Natural killer cell (primary cell): ENCODE measurements at regions of chr16 and their contacts with region 1.

Region 1: GRCh38 chr16:17404941-17405689 is 65.6 kb downstream of the XYLT1 start:
- DNase-seq: no peak
- ATAC-seq: no peak
- H3K4me3 ChIP-seq: no peak overlapping the region
- H3K4me3 Mint-ChIP-seq: no peak overlapping the region
- H3K27ac ChIP-seq: no peak overlapping the region
- H3K27ac Mint-ChIP-seq: peak overlapping the region in 1 of 2 donors; percentile 16
- H3K4me1 ChIP-seq: peaks cover 23% of the 10 kb centered on the region
- H3K4me1 Mint-ChIP-seq: peaks cover 40 to 45% of the 10 kb centered on the region in 2 donors
- H3K27me3 ChIP-seq: no peaks in the 10 kb centered on the region
- H3K27me3 Mint-ChIP-seq: no peaks in the 10 kb centered on the region
- CTCF ChIP-seq: no peak

Region 2: DNA sequence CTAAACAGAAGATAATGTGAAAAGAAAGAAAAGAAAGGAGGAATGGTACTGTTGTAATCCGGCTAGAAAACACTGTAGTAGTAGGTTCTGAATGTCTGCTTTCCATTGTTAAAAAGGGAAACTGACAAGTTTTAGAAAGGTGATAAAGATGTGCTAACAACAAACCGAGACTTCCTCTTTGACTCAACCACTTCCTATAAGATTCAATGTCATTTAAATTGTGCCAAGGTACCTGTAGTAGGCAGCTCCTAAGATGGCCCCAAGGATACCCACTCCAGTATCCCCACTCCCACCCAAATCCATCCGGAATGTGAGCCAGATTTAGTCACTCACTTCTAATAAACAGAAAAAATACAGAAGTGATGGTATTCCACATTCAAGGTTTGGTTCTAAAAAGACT is 34.5 kb after region 1 on chr16:
- intact Hi-C with region 1: loop called (anchors 5 kb)
- DNase-seq: peak in 1 of 2 donors; percentile 48
- ATAC-seq: peak; percentile 47 to 86 (median 70)
- H3K4me3 ChIP-seq: no peak overlapping the region
- H3K4me3 Mint-ChIP-seq: peak overlapping the region; percentile 71
- H3K27ac ChIP-seq: no peak overlapping the region
- H3K27ac Mint-ChIP-seq: peak overlapping the region; percentile 27 to 59
- H3K4me1 ChIP-seq: peaks cover 31% of the 10 kb centered on the region
- H3K4me1 Mint-ChIP-seq: peaks cover 80 to 83% of the 10 kb centered on the region in 2 donors
- H3K27me3 ChIP-seq: no peaks in the 10 kb centered on the region
- H3K27me3 Mint-ChIP-seq: no peaks in the 10 kb centered on the region
- CTCF ChIP-seq: no peak